HepG2 (cell line): ENCODE measurements at regions of chr2 and their contacts with region 1.

Region 1: GRCh38 chr2:43376523-43377198 is 150.3 kb upstream of the ZFP36L2 start:
- DNase-seq: peak; percentile 43
- ATAC-seq: peak; percentile 84
- H3K4me3 ChIP-seq: peak overlapping the region in 2 of 3 experiments; percentile 15 to 24; a peak in 1 of 6 replicates
- H3K27ac ChIP-seq: peak overlapping the region; percentile 49
- H3K4me1 ChIP-seq: peaks cover 84% of the 10 kb centered on the region
- H3K27me3 ChIP-seq: no peaks in the 10 kb centered on the region
- CTCF ChIP-seq: no peak
- EP300 ChIP-seq: no peak
- POLR2A ChIP-seq: no peak
- RAD21 ChIP-seq: no peak

Region 2: DNA sequence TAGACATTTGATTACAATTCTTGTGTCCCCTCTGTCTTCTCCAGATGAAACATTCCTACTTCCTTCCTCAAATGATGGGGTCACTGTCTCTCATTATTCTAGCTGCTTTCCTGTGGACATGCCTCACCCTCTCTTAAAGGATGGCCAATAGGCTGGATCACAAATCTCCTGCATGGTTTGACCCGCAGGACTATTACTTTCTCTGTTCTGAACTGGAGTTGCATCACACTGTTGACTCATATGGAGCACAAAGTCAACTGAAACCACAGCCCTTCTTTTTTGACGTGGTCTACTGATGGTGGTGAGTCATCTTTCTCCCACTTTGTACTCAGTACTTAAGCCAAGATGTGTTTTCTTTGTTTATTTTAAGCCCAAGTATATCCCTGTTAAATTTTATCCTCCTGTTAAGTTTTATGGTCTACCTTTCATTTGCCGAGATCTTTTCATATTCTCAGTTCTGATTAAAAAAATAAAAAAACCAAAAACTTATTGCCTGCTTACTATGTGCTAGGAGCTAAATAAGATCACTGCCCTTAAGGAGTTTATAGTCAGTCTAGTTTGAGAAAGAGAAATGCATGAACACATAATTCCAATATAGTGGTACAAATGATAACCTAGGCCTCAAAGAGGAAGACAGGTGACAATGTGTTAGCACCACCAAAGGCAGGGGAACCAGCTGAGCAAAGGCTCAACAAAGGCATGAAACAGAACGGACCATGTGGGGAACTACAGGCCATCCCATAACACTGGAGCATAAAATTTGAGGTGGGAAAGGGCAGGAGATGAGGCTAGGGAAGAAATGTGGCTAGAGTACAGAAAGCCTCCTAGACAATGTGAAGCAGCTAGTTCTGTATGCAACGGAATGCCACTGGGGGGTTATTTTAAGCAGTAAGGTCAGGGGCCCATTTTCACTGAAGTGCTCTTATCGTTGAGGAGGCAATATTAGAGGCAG is 82.6 kb before region 1 on chr2:
- CTCF ChIA-PET with region 1: no interaction called
- POLR2A ChIA-PET with region 1: interaction called, 7 read pairs
- in situ Hi-C with region 1: no loop called
- intact Hi-C with region 1: loop called (anchors 5 kb)
- DNase-seq: peak; percentile 99
- ATAC-seq: peak; percentile 95
- H3K4me3 ChIP-seq: peak overlapping the region in 1 of 3 experiments; percentile 6; a peak in 1 of 6 replicates
- H3K27ac ChIP-seq: peak overlapping the region; percentile 82
- H3K4me1 ChIP-seq: peaks cover 61% of the 10 kb centered on the region
- H3K27me3 ChIP-seq: no peaks in the 10 kb centered on the region
- CTCF ChIP-seq: peak; percentile 23; the same call in 1 of the 2 replicates
- EP300 ChIP-seq: peak; percentile 91 to 98
- POLR2A ChIP-seq: peak in 1 of 2 experiments; percentile 35; a peak in 1 of 4 replicates
- RAD21 ChIP-seq: peak; percentile 48

Region 3: DNA sequence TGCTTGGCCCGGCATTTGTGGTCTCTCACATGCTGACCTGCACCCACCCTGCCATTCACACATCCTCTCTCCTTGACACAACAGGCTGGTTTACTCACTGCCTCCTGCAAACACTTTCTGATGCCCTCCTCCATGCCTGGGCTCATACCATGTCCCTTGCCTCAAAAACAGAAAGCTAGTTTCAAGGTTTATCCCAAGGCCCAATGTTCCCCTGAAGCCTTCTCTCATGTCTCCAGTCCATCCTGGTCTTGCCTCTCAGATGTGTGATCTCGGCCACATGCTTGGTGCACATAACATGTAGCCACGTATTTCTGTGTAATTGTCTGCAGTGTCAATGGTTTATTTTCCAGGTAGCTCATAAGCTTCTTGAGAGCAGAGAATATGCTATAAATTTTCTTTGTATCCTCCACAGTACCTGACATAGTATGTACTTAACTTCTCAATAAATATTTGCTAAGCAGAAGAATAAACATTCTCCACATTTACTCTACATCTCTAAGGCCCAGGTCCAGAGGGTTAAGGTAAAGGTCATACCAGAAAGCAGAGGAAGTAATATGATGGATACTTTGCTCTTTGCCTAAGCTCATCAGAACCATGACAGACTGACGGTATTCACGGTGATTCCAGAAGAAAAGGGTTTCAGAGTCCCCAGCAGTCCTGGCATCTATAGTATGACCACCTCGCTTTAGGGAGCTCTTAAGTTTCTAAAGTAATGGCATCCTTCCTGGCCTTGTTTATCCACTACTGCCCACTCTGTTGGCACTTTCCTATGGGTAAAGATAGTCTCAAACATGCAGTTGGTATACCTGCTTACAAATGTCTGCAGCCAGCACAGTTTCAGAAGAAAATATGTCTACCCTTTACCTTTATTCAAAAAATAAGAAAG is 13.2 kb after region 1 on chr2:
- CTCF ChIA-PET with region 1: no interaction called
- POLR2A ChIA-PET with region 1: interaction called, 14 read pairs
- in situ Hi-C with region 1: no loop called
- intact Hi-C with region 1: no loop called
- DNase-seq: peak; percentile 83
- ATAC-seq: peak; percentile 92
- H3K4me3 ChIP-seq: peak overlapping the region in 2 of 3 experiments; percentile 2 to 35; a peak in 1 of 6 replicates
- H3K27ac ChIP-seq: peak overlapping the region; percentile 68
- H3K4me1 ChIP-seq: peaks cover 52% of the 10 kb centered on the region
- H3K27me3 ChIP-seq: no peaks in the 10 kb centered on the region
- CTCF ChIP-seq: no peak
- EP300 ChIP-seq: peak in 1 of 2 experiments; percentile 95; a peak in 2 of 4 replicates
- POLR2A ChIP-seq: no peak
- RAD21 ChIP-seq: no peak

Region 4: DNA sequence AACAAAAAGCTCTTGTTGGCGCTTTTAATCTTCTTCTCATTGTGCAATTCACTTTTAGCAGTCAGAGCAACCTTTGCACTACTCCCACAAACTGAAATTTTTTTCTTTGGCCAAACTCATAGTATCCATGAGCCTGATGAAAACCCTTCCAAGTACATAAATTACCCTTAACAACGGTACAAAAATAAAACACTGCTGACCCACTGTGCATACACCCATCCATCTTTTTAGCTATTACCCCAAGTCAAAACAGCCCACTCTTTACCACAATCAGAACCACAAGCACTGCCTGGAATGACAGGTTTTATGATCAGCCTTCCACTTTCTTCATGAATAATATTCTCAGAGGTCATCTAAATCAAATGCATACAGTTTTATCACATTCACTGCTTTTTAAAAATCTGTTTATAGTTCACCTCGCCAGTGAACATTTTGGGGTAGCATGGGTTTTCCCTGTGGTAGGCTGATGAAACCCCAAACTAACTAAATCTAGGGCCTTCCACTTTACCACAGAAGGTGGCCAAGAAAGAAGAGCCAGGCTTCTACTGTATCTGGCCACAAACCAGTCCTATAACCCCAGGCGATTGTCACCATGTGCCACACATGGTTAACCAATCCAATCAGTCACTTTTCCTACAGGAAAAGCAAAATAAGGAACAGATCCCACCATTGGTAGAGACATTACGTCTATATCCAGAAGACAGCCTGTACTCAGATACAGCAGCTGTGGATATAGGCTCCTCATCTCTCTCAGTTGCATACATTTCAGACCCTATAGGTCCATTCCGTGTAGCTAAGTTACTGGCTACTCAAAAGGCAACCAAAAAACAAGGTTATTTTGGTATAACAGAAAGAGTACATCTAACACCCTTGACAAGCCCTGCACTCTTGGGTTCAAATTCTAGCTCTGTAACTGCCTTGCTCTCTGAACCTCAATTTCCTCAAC is 47.9 kb after region 1 on chr2:
- CTCF ChIA-PET with region 1: no interaction called
- POLR2A ChIA-PET with region 1: interaction called, 7 read pairs
- in situ Hi-C with region 1: no loop called
- intact Hi-C with region 1: loop called (anchors 1 kb)
- DNase-seq: peak; percentile 94
- ATAC-seq: peak; percentile 83
- H3K4me3 ChIP-seq: no peak overlapping the region; a peak in 1 of 6 replicates
- H3K27ac ChIP-seq: peak overlapping the region; percentile 83
- H3K4me1 ChIP-seq: peaks cover 78% of the 10 kb centered on the region
- H3K27me3 ChIP-seq: no peaks in the 10 kb centered on the region
- CTCF ChIP-seq: no peak
- EP300 ChIP-seq: peak in 1 of 2 experiments; percentile 97; a peak in 2 of 4 replicates
- POLR2A ChIP-seq: no peak
- RAD21 ChIP-seq: peak; percentile 8; the same call in 1 of the 2 replicates

Region 5: GRCh38 chr2:43455731-43456642 is 79.3 kb after region 1 on chr2:
- CTCF ChIA-PET with region 1: no interaction called
- POLR2A ChIA-PET with region 1: no interaction called
- in situ Hi-C with region 1: no loop called
- intact Hi-C with region 1: loop called (anchors 5 kb)
- DNase-seq: peak; percentile 91
- ATAC-seq: peak; percentile 95
- H3K4me3 ChIP-seq: no peak overlapping the region
- H3K27ac ChIP-seq: peak overlapping the region; percentile 62
- H3K4me1 ChIP-seq: peaks cover 99% of the 10 kb centered on the region
- H3K27me3 ChIP-seq: no peaks in the 10 kb centered on the region
- CTCF ChIP-seq: peak; percentile 71
- EP300 ChIP-seq: peak in 1 of 2 experiments; percentile 77; a peak in 2 of 4 replicates
- POLR2A ChIP-seq: no peak
- RAD21 ChIP-seq: peak; percentile 27; the same call in 1 of the 2 replicates

Region 6: DNA sequence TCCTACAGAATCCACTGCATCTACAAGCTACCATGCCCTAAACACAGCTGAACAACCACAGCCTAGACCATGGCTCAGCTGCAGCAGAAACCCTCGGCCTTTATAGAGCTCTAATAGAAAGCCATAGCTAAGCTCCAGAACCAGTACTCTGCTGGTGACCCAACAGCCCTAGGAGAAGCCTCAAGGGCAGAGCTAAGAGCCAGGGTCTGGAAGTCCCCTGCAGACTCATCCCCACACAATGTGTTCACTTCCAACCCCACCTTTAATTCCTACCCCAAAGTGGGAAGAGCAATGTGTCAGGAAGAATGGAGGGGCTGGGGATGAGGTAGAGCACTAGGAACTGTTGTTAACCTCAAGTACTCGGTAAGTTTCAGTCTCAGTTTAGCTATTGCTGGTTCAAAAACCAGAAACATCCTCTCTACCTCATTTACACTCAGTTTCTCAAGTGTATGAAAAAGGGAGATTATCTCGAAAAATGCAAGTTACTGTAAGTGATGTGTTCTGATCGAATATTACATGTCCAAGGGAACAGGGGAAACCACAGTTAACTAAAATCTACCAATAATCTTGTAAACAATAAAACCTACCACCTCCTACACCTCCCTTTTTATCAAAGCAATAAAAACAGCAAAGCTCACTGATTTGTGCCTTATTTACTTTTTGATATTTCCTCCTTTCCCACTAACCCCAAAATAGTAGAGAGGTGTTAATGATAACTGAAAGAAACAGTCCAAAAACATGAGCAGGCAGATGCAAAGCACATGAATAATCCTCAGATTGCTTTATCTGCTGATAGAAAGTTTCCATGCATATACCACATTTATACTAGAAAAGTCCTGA is 182.9 kb after region 1 on chr2:
- CTCF ChIA-PET with region 1: no interaction called
- POLR2A ChIA-PET with region 1: no interaction called
- in situ Hi-C with region 1: no loop called
- intact Hi-C with region 1: no loop called
- DNase-seq: no peak
- ATAC-seq: no peak
- H3K4me3 ChIP-seq: no peak overlapping the region
- H3K27ac ChIP-seq: no peak overlapping the region
- H3K4me1 ChIP-seq: no peaks in the 10 kb centered on the region
- H3K27me3 ChIP-seq: no peaks in the 10 kb centered on the region
- CTCF ChIP-seq: no peak
- EP300 ChIP-seq: no peak
- POLR2A ChIP-seq: no peak
- RAD21 ChIP-seq: no peak